A549 (cell line): ENCODE measurements at regions of chr19 and their contacts with region 1.

Region 1: GRCh38 chr19:39818626-39819097 is 15.3 kb downstream of the DYRK1B start:
- DNase-seq: no peak
- ATAC-seq: no peak
- H3K4me3 ChIP-seq: no peak overlapping the region
- H3K27ac ChIP-seq: no peak overlapping the region
- H3K4me1 ChIP-seq: no peaks in the 10 kb centered on the region
- CTCF ChIP-seq: no peak
- EP300 ChIP-seq: no peak
- POLR2A ChIP-seq: no peak
- RAD21 ChIP-seq: no peak

Region 2: DNA sequence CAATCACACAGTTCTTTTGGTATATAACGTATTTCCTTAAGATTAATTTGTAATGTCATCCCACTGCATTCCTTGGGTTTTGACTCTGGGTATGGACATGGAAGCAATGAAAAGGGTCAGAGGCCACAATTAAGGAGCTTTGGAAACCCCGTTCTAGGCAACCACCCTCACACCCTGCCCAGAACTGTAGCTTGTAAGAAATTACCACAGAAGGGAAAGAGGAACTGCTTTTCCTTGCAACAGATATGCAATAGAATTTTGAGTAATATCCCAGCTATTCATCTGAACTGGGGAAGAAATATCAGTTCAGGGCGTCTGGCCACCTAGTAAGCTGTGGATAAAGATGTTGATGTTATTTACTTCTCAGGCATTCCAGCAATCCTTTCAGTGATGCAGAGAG is 79.8 kb before region 1 on chr19:
- CTCF ChIA-PET with region 1: no interaction called
- POLR2A ChIA-PET with region 1: no interaction called
- DNase-seq: no peak
- ATAC-seq: no peak
- H3K4me3 ChIP-seq: no peak overlapping the region
- H3K27ac ChIP-seq: no peak overlapping the region
- H3K4me1 ChIP-seq: no peaks in the 10 kb centered on the region
- CTCF ChIP-seq: no peak
- EP300 ChIP-seq: no peak
- POLR2A ChIP-seq: no peak
- RAD21 ChIP-seq: no peak

Region 3: GRCh38 chr19:39833464-39834286 is 15.0 kb after region 1 on chr19 and contains the start of gene DYRK1B:
- CTCF ChIA-PET with region 1: interaction called, 7 read pairs
- POLR2A ChIA-PET with region 1: interaction called, 10 read pairs
- DNase-seq: peak; percentile 100
- ATAC-seq: peak; percentile 90 to 95
- H3K4me3 ChIP-seq: peak within 1 kb of the TSS; percentile 73
- H3K27ac ChIP-seq: peak within 1 kb of the TSS; percentile 81 to 87
- H3K4me1 ChIP-seq: peaks cover 17% of the 10 kb centered on the region
- CTCF ChIP-seq: no peak
- EP300 ChIP-seq: no peak; a peak in 1 of 5 replicates
- POLR2A ChIP-seq: peak; percentile 40
- RAD21 ChIP-seq: no peak
- polyA plus RNA-seq, gene DYRK1B: 13.8 and 17.3 TPM in 2 replicates

Region 4: GRCh38 chr19:39916851-39917396 is 98.3 kb after region 1 on chr19:
- CTCF ChIA-PET with region 1: no interaction called
- POLR2A ChIA-PET with region 1: no interaction called
- DNase-seq: no peak
- ATAC-seq: peak; percentile 17 to 25; a peak in 2 of 6 replicates
- H3K4me3 ChIP-seq: no peak overlapping the region
- H3K27ac ChIP-seq: 0 out of 6 replicates have a peak overlapping the region, but pooled peaks of 1 of the 2 experiments have one; percentile 0
- H3K4me1 ChIP-seq: peaks cover 10% of the 10 kb centered on the region; the same call in 2 of the 3 replicates
- CTCF ChIP-seq: no peak
- EP300 ChIP-seq: no peak
- POLR2A ChIP-seq: no peak
- RAD21 ChIP-seq: no peak